H1 (cell line): ENCODE measurements at regions of chr6 and their contacts with region 1.

Region 1: DNA sequence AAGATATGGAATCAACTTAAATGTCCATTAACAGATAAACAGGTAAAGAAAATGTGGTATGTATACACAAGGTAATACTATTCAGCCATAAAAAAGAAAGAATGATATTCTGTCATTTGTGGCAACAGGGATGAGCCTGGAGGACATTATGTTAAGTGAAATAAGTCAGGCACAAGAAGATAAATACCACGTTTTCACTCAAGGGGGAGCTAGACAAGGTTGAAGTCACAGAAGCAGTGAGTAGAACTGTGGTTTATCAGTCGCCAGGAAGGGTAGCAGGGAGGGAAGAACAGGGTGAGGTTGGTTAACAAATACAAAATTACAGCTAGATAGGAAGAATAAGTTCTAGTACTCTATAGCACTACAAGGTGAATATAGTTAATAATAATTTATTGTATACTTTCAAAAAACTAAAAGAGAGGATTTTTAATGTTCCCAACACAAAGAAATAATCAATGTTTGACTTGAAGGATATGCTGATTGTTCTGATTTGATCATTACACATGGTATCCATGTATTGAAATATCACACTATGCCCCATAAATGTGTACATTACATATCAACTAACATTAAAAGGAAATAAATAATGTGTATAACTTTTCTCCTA is 21.1 kb downstream of the RTN4IP1 start:
- DNase-seq: no peak
- H3K4me3 ChIP-seq: no peak overlapping the region
- H3K27ac ChIP-seq: no peak overlapping the region
- H3K4me1 ChIP-seq: peaks cover 2 to 8% (median 4%) of the 10 kb centered on the region in 4 experiments; a peak in 5 of 7 replicates
- H3K27me3 ChIP-seq: no peaks in the 10 kb centered on the region
- CTCF ChIP-seq: peak in 2 of 3 experiments; percentile 63 to 82; a peak in 2 of 4 replicates
- EP300 ChIP-seq: no peak
- POLR2A ChIP-seq: no peak
- RAD21 ChIP-seq: peak; percentile 72 to 76

Region 2: DNA sequence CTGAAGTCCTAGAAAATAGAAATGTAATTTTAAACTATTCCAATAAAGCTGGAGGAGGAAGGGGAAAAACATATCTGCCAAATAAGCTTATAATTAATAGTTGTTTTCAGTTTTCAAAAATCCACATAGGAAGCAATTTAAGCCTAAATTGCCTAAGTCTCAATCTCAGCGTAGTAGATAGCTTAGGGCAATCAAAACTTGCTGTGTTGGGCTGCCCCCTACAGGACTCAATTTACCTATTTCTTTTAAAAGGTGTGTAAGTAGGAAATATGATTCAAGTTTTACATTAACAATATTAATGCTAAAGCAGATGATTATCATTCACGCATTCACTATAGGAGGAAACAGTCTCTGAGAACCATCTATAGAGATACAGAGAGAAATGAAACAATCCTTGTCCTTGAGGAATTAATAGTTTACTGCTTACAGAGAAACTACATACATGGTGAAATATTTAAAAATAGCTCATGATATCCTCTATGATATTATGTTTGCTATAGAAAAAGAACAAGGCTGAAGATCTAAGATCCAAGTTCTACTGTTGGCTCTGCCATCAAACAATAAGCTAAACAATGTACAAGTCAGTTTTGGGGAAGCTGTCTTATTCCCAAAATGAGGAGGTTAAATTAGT is 384.8 kb before region 1 on chr6:
- CTCF ChIA-PET with region 1: no interaction called
- POLR2A ChIA-PET with region 1: no interaction called
- DNase-seq: no peak
- H3K4me3 ChIP-seq: no peak overlapping the region
- H3K27ac ChIP-seq: no peak overlapping the region
- H3K4me1 ChIP-seq: no peaks in the 10 kb centered on the region
- H3K27me3 ChIP-seq: no peaks in the 10 kb centered on the region
- CTCF ChIP-seq: peak in 2 of 3 experiments; percentile 53 to 68; a peak in 3 of 4 replicates
- EP300 ChIP-seq: no peak
- POLR2A ChIP-seq: no peak
- RAD21 ChIP-seq: peak; percentile 84

Region 3: DNA sequence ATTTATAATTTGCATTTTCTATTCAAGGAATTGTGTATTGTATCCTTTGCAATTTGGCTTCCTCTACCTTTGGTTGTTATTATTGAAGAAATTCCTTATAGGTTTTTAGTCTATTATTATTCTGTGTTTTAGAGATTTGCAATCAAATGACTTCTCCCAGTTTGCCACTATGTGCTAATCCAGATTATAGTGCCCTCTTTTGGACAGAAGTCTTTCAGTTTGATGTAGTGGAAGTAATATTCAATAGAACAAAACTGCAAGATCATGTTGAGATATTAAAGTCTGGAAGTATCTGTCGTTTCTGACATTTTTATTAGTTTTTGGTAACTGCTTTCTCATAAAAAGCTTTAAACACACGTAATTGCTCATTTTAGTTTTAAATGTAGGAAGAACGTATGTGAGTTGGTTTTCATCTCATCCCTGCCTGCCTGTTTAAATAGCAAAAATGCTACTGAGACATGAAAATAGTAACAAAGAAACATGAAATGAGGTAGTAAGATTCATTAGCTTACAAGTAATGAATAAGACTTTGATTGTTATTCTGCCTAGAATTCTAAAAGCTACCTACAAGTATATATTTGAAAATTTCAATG is 51.7 kb before region 1 on chr6:
- CTCF ChIA-PET with region 1: no interaction called
- POLR2A ChIA-PET with region 1: no interaction called
- DNase-seq: no peak
- H3K4me3 ChIP-seq: no peak overlapping the region
- H3K27ac ChIP-seq: no peak overlapping the region
- H3K4me1 ChIP-seq: no peaks in the 10 kb centered on the region
- H3K27me3 ChIP-seq: no peaks in the 10 kb centered on the region
- CTCF ChIP-seq: peak in 1 of 3 experiments; percentile 7; a peak in 2 of 4 replicates
- EP300 ChIP-seq: no peak
- POLR2A ChIP-seq: no peak
- RAD21 ChIP-seq: peak in 1 of 2 experiments; percentile 10; a peak in 1 of 4 replicates

Region 4: DNA sequence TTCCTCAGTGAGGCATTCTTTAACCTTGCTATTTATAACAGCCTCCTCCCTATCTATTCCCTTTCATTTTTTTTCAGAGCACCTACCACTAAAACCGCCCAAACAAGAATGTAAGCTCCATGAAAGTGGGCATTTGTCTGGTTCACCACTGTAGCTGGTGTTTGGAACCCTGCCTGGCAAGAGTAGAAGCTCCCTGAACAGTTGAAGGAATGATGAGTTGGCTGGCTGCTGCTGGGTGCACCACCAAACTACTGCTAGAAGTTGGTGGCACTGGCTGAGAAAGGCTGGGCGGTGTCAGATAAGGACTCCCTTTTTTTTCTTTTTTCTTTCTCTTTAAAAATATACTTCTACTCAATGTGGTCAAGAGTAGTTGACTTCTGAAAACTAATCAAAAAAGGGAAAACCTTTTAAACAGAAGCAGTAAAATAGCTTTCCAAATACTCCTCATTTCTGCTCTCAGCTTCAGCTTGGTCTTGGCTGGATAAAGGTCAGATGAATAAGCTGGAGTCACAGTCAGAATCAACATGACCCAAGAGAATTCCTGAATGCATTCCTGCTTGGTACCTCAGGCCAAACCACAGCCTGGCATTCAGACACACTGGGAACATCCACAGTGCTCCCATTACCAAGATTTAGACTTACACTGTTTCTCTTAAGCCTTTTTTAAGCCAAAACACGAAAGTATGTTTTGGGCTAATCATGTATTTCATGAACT is 16.9 kb before region 1 on chr6:
- CTCF ChIA-PET with region 1: interaction called, 32 read pairs
- POLR2A ChIA-PET with region 1: interaction called, 3 read pairs
- DNase-seq: no peak
- H3K4me3 ChIP-seq: no peak overlapping the region
- H3K27ac ChIP-seq: no peak overlapping the region
- H3K4me1 ChIP-seq: no peaks in the 10 kb centered on the region
- H3K27me3 ChIP-seq: no peaks in the 10 kb centered on the region
- CTCF ChIP-seq: no peak
- EP300 ChIP-seq: no peak
- POLR2A ChIP-seq: no peak
- RAD21 ChIP-seq: no peak

Region 5: GRCh38 chr6:106620931-106621672 is 12.9 kb after region 1 on chr6:
- CTCF ChIA-PET with region 1: interaction called, 52 read pairs
- POLR2A ChIA-PET with region 1: interaction called, 6 read pairs
- DNase-seq: no peak
- H3K4me3 ChIP-seq: no peak overlapping the region
- H3K27ac ChIP-seq: no peak overlapping the region
- H3K4me1 ChIP-seq: peaks cover 0 to 5% (median 2%) of the 10 kb centered on the region in 4 experiments; a peak in 3 of 7 replicates
- H3K27me3 ChIP-seq: no peaks in the 10 kb centered on the region
- CTCF ChIP-seq: no peak
- EP300 ChIP-seq: no peak
- POLR2A ChIP-seq: no peak
- RAD21 ChIP-seq: no peak

Region 6: GRCh38 chr6:106637717-106638341 is 29.7 kb after region 1 on chr6:
- CTCF ChIA-PET with region 1: interaction called, 17 read pairs
- POLR2A ChIA-PET with region 1: no interaction called
- DNase-seq: no peak
- H3K4me3 ChIP-seq: no peak overlapping the region
- H3K27ac ChIP-seq: no peak overlapping the region
- H3K4me1 ChIP-seq: peaks cover 0 to 4% (median 0%) of the 10 kb centered on the region in 4 experiments; a peak in 2 of 7 replicates
- H3K27me3 ChIP-seq: no peaks in the 10 kb centered on the region
- CTCF ChIP-seq: no peak
- EP300 ChIP-seq: no peak
- POLR2A ChIP-seq: no peak
- RAD21 ChIP-seq: no peak

Region 7: DNA sequence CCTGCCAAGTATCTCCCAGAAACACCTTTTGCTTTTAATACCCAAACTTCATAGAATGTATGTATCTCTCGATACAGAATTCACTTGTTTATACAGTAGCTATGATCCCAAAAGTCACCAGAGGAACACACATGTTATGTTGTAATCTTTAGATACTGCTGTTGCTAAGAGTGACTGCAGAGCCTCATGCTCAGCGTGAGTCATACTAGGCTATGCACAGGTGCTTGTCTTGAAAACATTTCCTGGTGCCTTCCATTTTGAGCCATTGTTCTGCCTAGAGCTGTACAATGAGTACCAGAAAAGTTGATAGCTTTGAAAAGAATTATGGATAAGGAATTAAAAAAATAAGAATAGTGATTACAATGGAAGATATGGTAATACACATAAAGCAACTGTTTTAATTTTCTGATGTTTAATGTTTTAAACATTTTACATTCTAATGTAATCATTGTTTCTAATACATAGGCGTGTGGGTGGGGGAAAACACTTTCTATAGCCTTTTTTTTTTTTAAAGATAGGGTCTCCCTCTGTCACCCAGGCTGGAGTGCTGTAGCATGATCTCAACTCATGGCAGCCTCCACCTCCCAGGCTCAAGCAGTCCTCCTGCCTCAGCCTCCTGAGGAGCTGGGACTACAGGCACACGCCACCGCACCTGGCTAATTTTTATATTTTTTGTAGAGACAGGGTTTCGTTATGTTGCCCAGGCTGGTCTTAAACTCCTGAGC is 287.0 kb after region 1 on chr6:
- CTCF ChIA-PET with region 1: no interaction called
- POLR2A ChIA-PET with region 1: no interaction called
- DNase-seq: no peak
- H3K4me3 ChIP-seq: no peak overlapping the region
- H3K27ac ChIP-seq: no peak overlapping the region
- H3K4me1 ChIP-seq: peaks cover 0 to 9% (median 4%) of the 10 kb centered on the region in 4 experiments; a peak in 5 of 7 replicates
- H3K27me3 ChIP-seq: no peaks in the 10 kb centered on the region
- CTCF ChIP-seq: no peak
- EP300 ChIP-seq: no peak
- POLR2A ChIP-seq: no peak
- RAD21 ChIP-seq: no peak